ENCODE measurements at regions of chr22 and their contacts with region 1.

Region 1: GRCh38 chr22:19717691-19718455 is 3.6 kb downstream of the SEPTIN5 start:
- DNase-seq: peak; percentile 72 to 87
- ATAC-seq: peak; percentile 49 to 81 (median 63)
- H3K4me3 ChIP-seq: peak overlapping the region; percentile 42 to 77 (median 66)
- H3K27ac ChIP-seq: peak overlapping the region; percentile 58 to 99 (median 94)
- H3K4me1 ChIP-seq: peaks cover 22 to 86% (median 50%) of the 10 kb centered on the region in 9 donors
- H3K27me3 ChIP-seq: peaks cover 0 to 75% (median 28%) of the 10 kb centered on the region in 7 donors
- CTCF ChIP-seq: peak; percentile 92 to 100 (median 99)

Region 2: DNA sequence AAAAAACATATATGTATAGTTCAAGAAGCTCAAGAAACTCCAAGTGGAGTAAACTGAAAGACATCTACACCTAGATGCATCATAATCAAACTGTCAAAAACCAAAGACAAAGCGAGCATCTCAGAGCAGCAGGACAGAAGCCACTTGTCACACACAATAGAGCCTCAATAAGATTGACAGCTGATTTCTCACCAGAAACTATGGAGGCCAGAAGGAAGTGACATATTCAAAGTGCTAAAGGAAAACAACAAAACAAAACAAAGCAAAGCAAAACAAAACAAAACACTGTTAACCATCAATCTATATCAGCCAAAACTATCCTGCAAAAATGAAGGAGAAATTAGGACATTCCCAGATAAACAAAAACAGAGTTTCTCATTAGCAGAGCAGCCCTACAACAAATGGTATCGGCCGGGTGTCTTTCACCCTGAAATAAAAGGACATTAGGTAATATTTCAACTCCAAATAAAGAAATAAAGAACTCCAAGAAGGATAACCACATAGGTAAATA is 69.4 kb before region 1 on chr22:
- intact Hi-C with region 1: no loop called
- DNase-seq: no peak
- ATAC-seq: no peak
- H3K4me3 ChIP-seq: no peak overlapping the region
- H3K27ac ChIP-seq: no peak overlapping the region
- H3K4me1 ChIP-seq: peaks cover 0 to 5% (median 0%) of the 10 kb centered on the region in 9 donors
- H3K27me3 ChIP-seq: peaks cover 0 to 24% (median 11%) of the 10 kb centered on the region in 7 donors
- CTCF ChIP-seq: no peak

Region 3: DNA sequence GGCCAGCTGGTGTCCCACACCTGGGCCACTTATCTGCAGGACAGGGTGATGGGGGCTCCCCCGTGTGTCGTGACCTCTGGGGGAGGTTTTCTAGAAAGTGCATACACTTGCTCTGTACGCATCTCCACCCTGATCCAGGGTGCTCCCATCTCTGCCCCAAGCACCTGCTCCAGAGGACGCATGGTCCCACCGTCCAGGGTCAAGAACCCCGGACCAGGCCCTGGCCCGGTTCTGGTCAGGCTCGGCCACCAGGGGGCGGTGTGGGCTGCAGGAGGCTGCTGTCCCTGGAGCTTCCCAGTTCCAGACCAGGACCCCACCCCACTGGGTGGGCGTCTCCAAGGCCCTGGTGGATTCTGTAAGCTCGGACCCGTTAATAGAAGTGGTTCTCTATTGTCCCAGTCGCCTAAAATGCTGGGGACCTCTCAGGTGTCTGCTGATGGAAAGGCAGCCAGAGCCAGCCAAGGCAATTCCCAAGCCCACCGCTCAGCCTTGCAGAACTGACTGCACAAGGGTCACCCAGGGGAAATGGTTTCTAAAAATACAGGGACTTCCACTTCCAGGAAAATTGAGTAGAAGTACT is 38.3 kb before region 1 on chr22:
- intact Hi-C with region 1: loop called in 6 of 10 experiments (anchors 1 to 5 kb)
- DNase-seq: peak; percentile 38 to 75
- ATAC-seq: peak; percentile 76 to 89 (median 82)
- H3K4me3 ChIP-seq: no peak overlapping the region
- H3K27ac ChIP-seq: no peak overlapping the region
- H3K4me1 ChIP-seq: peaks cover 0 to 9% (median 0%) of the 10 kb centered on the region in 9 donors
- H3K27me3 ChIP-seq: peaks cover 0 to 42% (median 10%) of the 10 kb centered on the region in 7 donors
- CTCF ChIP-seq: peak; percentile 76 to 89 (median 87)

Measured in heart right ventricle (tissue), 16 donors.